ENCODE measurements at regions of chr9 and their contacts with region 1.

Region 1: DNA sequence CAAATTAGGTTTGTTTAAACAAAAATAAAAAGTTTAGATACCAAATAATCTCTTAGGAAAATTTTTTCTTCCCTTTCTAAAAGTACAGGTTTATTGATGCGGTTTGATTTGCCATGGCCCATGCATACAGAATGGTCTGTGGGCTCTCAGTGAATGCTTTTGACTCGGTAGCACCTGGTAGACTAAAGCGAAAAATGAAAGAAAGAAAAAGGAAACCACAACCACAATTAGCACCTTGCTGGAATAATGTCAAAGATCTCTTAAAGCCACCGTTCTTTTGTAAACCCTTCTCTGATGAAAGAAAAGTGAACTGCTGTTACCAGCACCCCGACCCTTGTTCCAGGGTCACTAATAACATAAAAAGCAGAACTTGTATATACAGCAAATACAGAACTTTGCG is 157.9 kb downstream of the NFIB start:
- DNase-seq: peak; percentile 89
- H3K4me3 ChIP-seq: peak overlapping the region; percentile 62
- H3K27ac ChIP-seq: peak overlapping the region; percentile 100
- H3K4me1 ChIP-seq: peaks cover 91% of the 10 kb centered on the region
- CTCF ChIP-seq: no peak

Region 2: DNA sequence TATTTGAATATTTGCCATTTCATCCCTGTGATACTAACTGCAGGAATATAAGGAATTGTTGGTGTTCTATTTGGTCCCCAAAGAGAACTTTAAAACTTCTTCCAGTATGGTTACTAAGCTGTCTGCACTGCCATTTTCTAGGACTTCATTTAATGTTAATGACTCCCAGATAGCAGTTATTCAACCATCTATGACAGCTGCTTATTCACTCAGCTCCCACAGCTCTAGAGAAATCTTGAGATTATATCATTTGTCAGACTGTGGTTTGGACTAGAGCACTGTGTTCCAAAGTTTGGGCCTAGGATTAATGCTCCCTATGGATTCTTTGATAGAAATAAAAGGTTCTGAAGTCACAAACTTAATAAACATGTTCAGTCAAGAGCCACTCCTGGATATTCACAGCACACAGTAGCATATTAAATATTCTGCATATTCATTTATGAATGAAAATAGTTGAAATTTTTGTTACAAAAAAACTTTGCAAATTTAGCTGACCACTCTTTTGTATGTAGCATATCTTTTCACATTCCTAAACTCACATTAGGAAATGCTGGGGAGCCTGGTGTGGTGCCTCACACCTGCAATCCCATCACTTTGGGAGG is 15.8 kb before region 1 on chr9:
- CTCF ChIA-PET with region 1: no interaction called
- POLR2A ChIA-PET with region 1: interaction called, 11 read pairs
- intact Hi-C with region 1: no loop called
- DNase-seq: no peak
- H3K4me3 ChIP-seq: no peak overlapping the region
- H3K27ac ChIP-seq: no peak overlapping the region
- H3K4me1 ChIP-seq: peaks cover 21% of the 10 kb centered on the region
- CTCF ChIP-seq: no peak

Region 3: GRCh38 chr9:14314929-14315645 is 159.0 kb after region 1 on chr9:
- CTCF ChIA-PET with region 1: no interaction called
- POLR2A ChIA-PET with region 1: interaction called, 7 read pairs
- intact Hi-C with region 1: loop called (anchors 1 kb)
- DNase-seq: peak; percentile 64
- H3K4me3 ChIP-seq: peak overlapping the region; percentile 93
- H3K27ac ChIP-seq: peak overlapping the region; percentile 86
- H3K4me1 ChIP-seq: peaks cover 70% of the 10 kb centered on the region
- CTCF ChIP-seq: no peak

Region 4: GRCh38 chr9:14347406-14348122 is 191.5 kb after region 1 on chr9:
- CTCF ChIA-PET with region 1: no interaction called
- POLR2A ChIA-PET with region 1: no interaction called
- intact Hi-C with region 1: no loop called
- DNase-seq: no peak
- H3K4me3 ChIP-seq: no peak overlapping the region
- H3K27ac ChIP-seq: no peak overlapping the region
- H3K4me1 ChIP-seq: no peaks in the 10 kb centered on the region
- CTCF ChIP-seq: no peak

Region 5: DNA sequence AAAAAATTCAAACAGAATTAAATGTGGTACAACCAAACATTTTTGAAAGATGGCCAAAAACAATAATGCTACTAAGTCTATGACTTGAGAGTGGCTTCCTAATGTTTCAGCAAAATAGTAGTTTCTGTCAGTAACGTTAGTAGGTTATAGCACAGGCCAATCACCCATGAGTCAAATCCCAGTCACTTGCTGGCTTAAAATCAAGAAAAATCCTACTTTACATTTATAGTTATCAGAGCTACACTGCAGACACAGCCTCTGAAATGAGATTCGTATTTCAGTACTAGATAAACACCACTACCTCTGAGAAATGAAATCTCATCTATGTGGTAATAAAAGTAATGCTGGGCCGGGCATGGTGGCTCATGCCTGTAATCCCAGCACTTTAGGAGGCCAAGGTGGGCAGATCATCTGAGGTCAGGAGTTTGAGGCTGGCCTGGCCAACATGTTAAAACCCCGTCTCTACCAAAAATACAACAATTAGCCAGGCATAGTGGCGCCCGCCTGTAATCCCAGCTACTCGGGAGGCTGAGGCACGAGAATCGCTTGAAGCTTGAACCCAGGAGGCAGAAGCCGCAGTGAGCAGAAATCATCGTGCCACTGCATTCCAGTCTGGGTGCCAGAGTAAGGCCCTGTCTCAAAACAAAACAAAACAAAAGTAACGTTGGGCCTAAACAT is 531.1 kb after region 1 on chr9:
- CTCF ChIA-PET with region 1: no interaction called
- POLR2A ChIA-PET with region 1: interaction called, 3 read pairs
- intact Hi-C with region 1: loop called (anchors 10 kb)
- DNase-seq: no peak
- H3K4me3 ChIP-seq: peak overlapping the region; percentile 79
- H3K27ac ChIP-seq: peak overlapping the region; percentile 88
- H3K4me1 ChIP-seq: peaks cover 50% of the 10 kb centered on the region
- CTCF ChIP-seq: no peak